Heart right ventricle (tissue), 16 donors: ENCODE measurements at regions of chr9 and their contacts with region 1.

Region 1: DNA sequence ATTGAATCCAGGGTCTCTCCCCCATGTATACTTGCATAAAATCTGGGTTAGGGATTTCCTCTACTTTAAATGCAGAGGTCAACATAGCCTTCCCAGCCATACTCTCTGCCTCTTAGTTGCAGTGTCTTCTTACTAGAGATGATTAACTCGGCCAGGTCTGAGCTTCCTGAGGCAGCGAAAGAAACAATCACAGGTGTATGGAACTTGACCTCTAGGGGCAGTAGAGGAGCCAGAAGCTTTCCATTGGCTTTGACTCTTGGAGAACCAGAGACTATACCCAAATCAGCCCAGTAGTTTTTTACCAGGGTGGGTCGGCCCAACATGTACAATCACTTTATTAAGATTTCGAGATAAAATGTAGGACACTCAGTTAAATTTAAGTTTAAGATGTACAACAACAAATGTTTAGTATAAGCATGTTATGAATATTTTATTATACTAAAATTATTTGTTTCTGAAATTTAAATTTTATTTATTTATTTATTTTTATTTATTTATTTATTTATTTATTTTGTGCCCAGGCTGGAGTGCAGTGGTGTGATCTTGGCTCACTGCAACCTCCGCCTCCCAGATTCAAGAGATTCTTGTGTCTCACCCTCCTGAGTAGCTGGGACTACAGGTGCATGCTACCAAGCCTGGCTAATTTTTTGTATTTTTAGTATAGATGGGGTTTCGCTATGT is 48.0 kb upstream of the DMRT3 start:
- DNase-seq: no peak
- ATAC-seq: no peak
- H3K4me3 ChIP-seq: no peak overlapping the region
- H3K27ac ChIP-seq: no peak overlapping the region
- H3K4me1 ChIP-seq: no peaks in the 10 kb centered on the region
- H3K27me3 ChIP-seq: peaks cover 0 to 20% (median 6%) of the 10 kb centered on the region in 7 donors
- CTCF ChIP-seq: peak in 7 of 9 donors; percentile 11 to 52 (median 22)

Region 2: GRCh38 chr9:860706-861105 is 67.8 kb before region 1 on chr9:
- intact Hi-C with region 1: loop called in 1 of 10 experiments (anchors 10 kb)
- DNase-seq: no peak
- ATAC-seq: no peak
- H3K4me3 ChIP-seq: no peak overlapping the region
- H3K27ac ChIP-seq: no peak overlapping the region
- H3K4me1 ChIP-seq: no peaks in the 10 kb centered on the region
- H3K27me3 ChIP-seq: peaks cover 0 to 27% (median 8%) of the 10 kb centered on the region in 7 donors
- CTCF ChIP-seq: no peak

Region 3: GRCh38 chr9:866188-866587 is 62.3 kb before region 1 on chr9:
- intact Hi-C with region 1: loop called in 2 of 10 experiments (anchors 2 to 10 kb)
- DNase-seq: no peak
- ATAC-seq: no peak
- H3K4me3 ChIP-seq: no peak overlapping the region
- H3K27ac ChIP-seq: no peak overlapping the region
- H3K4me1 ChIP-seq: no peaks in the 10 kb centered on the region
- H3K27me3 ChIP-seq: peaks cover 0 to 13% (median 3%) of the 10 kb centered on the region in 7 donors
- CTCF ChIP-seq: no peak